ENCODE measurements at regions of chr9 and their contacts with region 1.

Region 1: GRCh38 chr9:134455934-134456739 is 129.9 kb downstream of the RXRA start:
- DNase-seq: peak; percentile 70 to 91 (median 80)
- ATAC-seq: peak; percentile 95
- H3K4me3 Mint-ChIP-seq: peak overlapping the region; percentile 83 to 91 (median 88)
- H3K27ac Mint-ChIP-seq: peak overlapping the region; percentile 92 to 99 (median 98)
- H3K4me1 Mint-ChIP-seq: peaks cover 4 to 20% (median 14%) of the 10 kb centered on the region in 4 donors
- H3K27me3 Mint-ChIP-seq: no peaks in the 10 kb centered on the region

Region 2: DNA sequence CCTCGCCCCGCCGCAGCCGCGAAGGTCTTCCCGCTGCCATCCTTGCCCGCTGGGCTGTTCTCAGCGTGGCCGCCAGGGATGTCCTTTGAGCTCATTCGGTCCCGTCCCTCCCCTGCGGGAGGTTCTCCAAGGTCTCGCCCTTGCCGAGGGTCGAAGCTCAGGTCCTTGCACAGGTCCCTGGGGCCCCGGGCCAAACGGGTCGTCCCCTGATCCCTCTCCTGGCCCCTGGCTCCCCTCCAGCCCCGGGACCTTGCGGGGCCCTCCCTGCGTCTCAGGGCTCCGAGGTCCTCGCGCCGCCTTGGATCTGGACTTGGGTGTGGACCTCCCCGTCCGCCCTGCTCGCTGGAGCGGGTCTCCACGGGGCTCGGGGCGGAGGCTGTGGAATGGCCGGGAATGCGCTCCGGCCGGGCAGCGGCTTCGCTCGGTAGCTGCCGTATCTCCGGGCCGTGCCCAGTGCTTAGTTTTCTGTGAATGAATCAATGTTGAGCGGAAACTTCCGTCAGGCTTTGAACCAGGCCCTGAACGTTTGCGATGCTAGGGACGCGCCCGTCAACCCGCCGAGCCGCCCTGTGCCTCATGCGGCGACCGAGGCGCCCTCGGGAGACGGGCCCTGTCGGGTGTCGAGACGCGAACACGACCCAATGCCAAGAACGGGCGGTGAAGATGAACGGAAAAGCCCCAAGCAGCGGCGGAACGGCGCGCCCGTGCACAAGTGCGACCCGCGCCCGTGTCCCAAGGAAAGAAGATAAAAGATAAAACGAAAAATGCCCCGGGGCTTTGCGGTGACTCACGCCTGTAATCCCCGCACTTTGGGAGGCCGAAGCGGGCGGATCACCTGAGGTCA is 292.6 kb before region 1 on chr9:
- POLR2A ChIA-PET with region 1: interaction called, 21 read pairs
- DNase-seq: peak; percentile 56 to 81 (median 66)
- ATAC-seq: peak in 1 of 2 donors; percentile 7
- H3K4me3 Mint-ChIP-seq: peak overlapping the region in 3 of 10 donors; percentile 20 to 38 (median 26)
- H3K27ac Mint-ChIP-seq: peak overlapping the region in 2 of 10 donors; percentile 8 to 44
- H3K4me1 Mint-ChIP-seq: peaks cover 8 to 25% (median 14%) of the 10 kb centered on the region in 4 donors
- H3K27me3 Mint-ChIP-seq: no peaks in the 10 kb centered on the region

Region 3: DNA sequence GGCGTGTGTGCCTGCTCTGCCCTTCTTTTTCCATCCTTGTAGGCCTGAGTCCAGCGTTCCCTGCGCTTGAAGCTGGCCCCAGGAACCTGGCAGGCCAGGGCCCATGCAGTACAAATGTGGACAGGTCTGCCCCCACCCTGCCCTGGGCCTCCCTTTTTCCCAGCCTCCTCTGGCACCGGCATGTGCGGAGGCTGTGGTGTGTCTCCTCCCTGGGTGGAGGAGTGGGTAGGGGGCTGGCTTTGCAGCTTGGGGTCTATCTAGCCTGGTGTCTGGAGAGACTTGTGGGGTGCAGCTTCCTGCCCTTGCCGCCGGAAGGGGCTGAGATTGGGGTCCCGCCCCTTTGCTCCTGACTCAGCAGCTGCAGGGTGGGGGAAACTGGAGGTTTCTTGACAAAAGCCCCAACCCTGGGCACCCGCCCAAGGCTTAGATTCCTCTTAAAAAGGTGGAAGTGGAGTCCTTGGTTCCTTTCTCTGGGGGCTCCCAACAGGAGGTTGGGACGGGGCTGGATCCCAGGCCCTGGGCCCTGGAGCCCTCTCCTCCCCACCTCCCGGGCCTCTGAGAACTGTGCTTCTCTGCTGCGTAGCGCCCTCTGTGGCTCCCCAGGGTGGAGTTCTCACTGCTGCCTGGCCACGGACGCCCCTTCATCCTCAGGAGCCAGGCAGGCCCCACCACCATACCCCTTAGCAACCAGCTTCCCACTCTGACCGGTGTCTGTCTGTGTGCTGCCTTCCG is 111.9 kb before region 1 on chr9:
- POLR2A ChIA-PET with region 1: no interaction called
- DNase-seq: peak in 8 of 10 donors; percentile 17 to 49 (median 31)
- ATAC-seq: peak; percentile 84 to 86
- H3K4me3 Mint-ChIP-seq: peak overlapping the region in 8 of 10 donors; percentile 33 to 69 (median 56)
- H3K27ac Mint-ChIP-seq: peak overlapping the region in 7 of 10 donors; percentile 18 to 80 (median 71)
- H3K4me1 Mint-ChIP-seq: peaks cover 21 to 45% (median 28%) of the 10 kb centered on the region in 4 donors
- H3K27me3 Mint-ChIP-seq: no peaks in the 10 kb centered on the region

Region 4: GRCh38 chr9:134475011-134475790 is 19.1 kb after region 1 on chr9:
- POLR2A ChIA-PET with region 1: interaction called, 71 read pairs
- DNase-seq: peak; percentile 20 to 82 (median 52)
- ATAC-seq: peak; percentile 95 to 97
- H3K4me3 Mint-ChIP-seq: peak overlapping the region; percentile 15 to 82 (median 68)
- H3K27ac Mint-ChIP-seq: peak overlapping the region; percentile 95 to 99 (median 98)
- H3K4me1 Mint-ChIP-seq: peaks cover 4 to 20% (median 8%) of the 10 kb centered on the region in 4 donors
- H3K27me3 Mint-ChIP-seq: no peaks in the 10 kb centered on the region

Region 5: GRCh38 chr9:134551650-134552348 is 95.7 kb after region 1 on chr9:
- POLR2A ChIA-PET with region 1: no interaction called
- DNase-seq: peak in 1 of 10 donors; percentile 26
- ATAC-seq: no peak
- H3K4me3 Mint-ChIP-seq: no peak overlapping the region
- H3K27ac Mint-ChIP-seq: peak overlapping the region in 1 of 10 donors; percentile 73
- H3K4me1 Mint-ChIP-seq: no peaks in the 10 kb centered on the region
- H3K27me3 Mint-ChIP-seq: peaks cover 3 to 39% (median 18%) of the 10 kb centered on the region in 5 donors

Region 6: DNA sequence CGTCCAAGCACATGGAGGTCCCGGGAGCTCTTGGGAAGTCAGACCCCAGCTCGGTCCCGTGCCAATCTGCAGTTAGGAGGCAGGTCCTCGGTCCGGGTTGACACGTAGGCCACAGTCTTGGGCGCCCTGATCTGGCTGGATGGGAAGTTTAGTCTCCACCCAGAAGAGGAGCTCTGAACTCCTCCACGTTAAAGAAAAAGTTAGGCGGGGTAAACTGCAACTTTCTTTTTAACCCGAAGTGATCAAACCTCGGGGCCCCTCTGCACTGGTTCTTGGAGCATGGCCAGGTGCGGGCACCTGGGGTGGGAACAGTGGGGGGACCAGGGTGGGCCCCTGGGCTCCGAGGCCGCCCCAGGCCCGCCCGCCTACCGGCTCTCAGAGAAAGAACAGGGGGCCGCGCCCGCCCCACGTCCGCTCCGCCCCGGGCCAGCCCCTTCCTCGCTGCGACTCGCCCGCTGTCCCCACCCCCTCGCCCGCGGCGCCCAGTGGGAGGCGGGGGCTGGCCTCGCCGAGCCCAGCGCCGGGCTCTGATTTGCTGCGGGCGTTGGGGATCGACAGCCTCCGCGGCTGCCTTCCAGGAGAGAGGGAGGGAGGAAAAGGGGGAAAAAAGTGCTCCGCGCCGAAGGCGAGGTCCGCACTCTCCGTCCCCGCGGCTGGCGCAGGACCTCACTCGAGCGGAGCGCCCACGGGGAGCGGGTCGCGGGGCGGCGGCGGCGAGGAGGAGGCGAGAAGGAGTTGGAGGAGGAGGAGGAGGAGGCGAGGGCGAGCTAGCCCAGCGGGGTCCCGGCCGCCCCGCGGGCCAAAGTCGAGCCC is 185.2 kb after region 1 on chr9 and contains the start of gene COL5A1:
- POLR2A ChIA-PET with region 1: no interaction called
- DNase-seq: peak in 7 of 10 donors; percentile 7 to 33 (median 20)
- ATAC-seq: peak; percentile 76 to 95
- H3K4me3 Mint-ChIP-seq: peak within 1 kb of the TSS in 9 of 10 donors; percentile 36 to 70 (median 53)
- H3K27ac Mint-ChIP-seq: no peak within 1 kb of the TSS
- H3K4me1 Mint-ChIP-seq: peaks cover 0 to 2% (median under 1%) of the 10 kb centered on the region in 4 donors
- H3K27me3 Mint-ChIP-seq: peaks cover 3 to 45% (median 23%) of the 10 kb centered on the region in 5 donors
- polyA plus RNA-seq, gene COL5A1: not detected

Measured in naive thymus-derived CD8-positive, alpha-beta T cell (primary cell).